ENCODE measurements at regions of chr17 and their contacts with region 1.

Region 1: DNA sequence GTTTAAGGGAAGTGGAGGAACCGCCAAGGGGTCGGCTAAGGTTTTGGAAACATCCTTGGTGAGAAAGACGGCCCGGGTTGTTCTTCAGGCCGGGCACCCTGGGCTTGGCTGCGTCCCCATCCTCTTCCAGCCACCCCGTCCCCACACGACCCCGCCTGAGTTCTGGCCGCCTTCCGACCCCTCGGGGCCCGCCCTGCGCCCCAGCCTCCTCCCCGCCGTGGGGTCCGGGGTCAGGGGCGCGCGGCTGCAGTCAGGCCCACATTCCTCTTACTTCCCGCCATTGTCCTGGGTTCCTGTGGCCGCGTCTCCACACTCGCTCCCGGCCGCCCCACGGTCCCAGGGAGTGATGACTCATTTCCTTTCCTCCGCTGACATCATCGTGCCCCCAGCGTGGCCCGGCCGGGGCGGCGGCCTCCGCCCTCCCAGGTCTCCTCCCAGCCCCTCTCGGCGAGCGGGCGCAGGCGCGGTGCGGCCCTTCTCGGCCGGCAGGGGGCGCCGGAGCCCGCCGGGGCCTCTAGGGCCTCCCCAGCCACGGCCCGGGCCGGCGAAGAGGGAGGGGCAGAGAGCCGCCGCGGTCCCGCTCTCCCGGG is 59.6 kb downstream of the WSB1 start:
- DNase-seq: peak; percentile 89
- H3K4me3 ChIP-seq: peak overlapping the region; percentile 69 to 73 (median 72)
- H3K27ac ChIP-seq: peak overlapping the region; percentile 78
- H3K4me1 ChIP-seq: peaks cover 10% of the 10 kb centered on the region
- H3K27me3 ChIP-seq: no peaks in the 10 kb centered on the region
- CTCF ChIP-seq: peak; percentile 54 to 60

Region 2: DNA sequence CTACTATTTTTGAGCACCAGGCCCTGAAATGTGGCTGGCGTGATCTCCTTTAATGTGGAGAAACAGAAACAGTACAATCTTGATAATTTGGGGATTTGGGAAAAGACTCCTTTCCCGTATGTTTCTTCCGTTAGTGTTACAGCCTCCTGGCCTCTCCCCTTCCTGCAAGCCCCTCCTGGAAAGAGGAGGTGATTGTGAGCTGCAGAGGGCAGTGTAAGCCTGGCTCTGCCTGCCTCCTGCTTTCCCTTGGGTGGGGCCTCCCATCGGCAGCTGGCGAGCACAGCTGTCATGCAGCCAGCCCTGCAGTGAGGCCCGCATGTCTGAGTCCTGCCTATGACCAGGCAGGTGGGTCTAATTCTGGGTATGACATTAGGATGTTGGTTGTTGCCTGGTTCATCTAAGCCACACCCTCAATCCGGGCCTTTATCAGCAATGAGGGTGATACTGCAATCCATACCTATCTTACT is 108.3 kb before region 1 on chr17:
- CTCF ChIA-PET with region 1: no interaction called
- dilution Hi-C with region 1: no loop called
- in situ Hi-C with region 1: no loop called
- intact Hi-C with region 1: loop called (anchors 2 kb)
- DNase-seq: peak; percentile 76
- H3K4me3 ChIP-seq: peak overlapping the region; percentile 12 to 26 (median 24)
- H3K27ac ChIP-seq: peak overlapping the region; percentile 71
- H3K4me1 ChIP-seq: peaks cover 47% of the 10 kb centered on the region
- H3K27me3 ChIP-seq: no peaks in the 10 kb centered on the region
- CTCF ChIP-seq: peak; percentile 66 to 77

Region 3: DNA sequence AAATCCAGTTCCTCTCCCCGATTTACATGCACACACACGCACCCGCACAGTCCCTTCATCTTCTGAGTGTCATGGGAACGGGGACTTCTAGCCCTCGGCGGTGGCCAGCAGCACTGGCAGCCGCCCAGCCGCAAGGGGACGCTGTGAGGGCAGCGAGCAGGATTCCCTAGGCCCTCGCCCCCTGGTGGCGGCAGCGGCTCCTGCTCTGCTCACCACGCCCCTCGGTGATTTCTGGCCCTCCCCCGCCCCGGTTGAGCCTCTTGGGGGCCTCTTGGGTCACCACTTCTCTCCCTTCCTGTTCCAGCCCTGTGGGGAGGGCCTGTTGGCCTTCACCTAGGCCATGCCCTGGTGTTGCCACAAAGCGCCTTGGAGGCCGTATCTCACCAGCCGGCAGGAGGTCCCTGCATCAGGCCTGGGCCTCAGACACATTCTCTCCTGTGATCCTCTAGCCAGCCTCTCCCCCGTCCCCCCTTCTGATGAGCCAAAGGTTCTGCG is 27.5 kb after region 1 on chr17:
- CTCF ChIA-PET with region 1: interaction called, 9 read pairs
- dilution Hi-C with region 1: no loop called
- in situ Hi-C with region 1: no loop called
- intact Hi-C with region 1: loop called (anchors 2 kb)
- DNase-seq: peak; percentile 23
- H3K4me3 ChIP-seq: no peak overlapping the region
- H3K27ac ChIP-seq: no peak overlapping the region
- H3K4me1 ChIP-seq: peaks cover 35% of the 10 kb centered on the region
- H3K27me3 ChIP-seq: no peaks in the 10 kb centered on the region
- CTCF ChIP-seq: peak; percentile 78 to 84

Region 4: GRCh38 chr17:27494192-27495091 is 140.9 kb after region 1 on chr17:
- CTCF ChIA-PET with region 1: interaction called, 3 read pairs
- dilution Hi-C with region 1: no loop called
- in situ Hi-C with region 1: no loop called
- intact Hi-C with region 1: loop called (anchors 5 kb)
- DNase-seq: peak; percentile 51
- H3K4me3 ChIP-seq: peak overlapping the region; percentile 8 to 34 (median 22)
- H3K27ac ChIP-seq: no peak overlapping the region
- H3K4me1 ChIP-seq: peaks cover 22% of the 10 kb centered on the region
- H3K27me3 ChIP-seq: no peaks in the 10 kb centered on the region
- CTCF ChIP-seq: peak; percentile 42 to 77

Region 5: GRCh38 chr17:27540318-27541101 is 187.0 kb after region 1 on chr17:
- CTCF ChIA-PET with region 1: no interaction called
- dilution Hi-C with region 1: no loop called
- in situ Hi-C with region 1: no loop called
- intact Hi-C with region 1: no loop called
- DNase-seq: peak; percentile 49
- H3K4me3 ChIP-seq: no peak overlapping the region
- H3K27ac ChIP-seq: no peak overlapping the region
- H3K4me1 ChIP-seq: no peaks in the 10 kb centered on the region
- H3K27me3 ChIP-seq: peaks cover 6% of the 10 kb centered on the region
- CTCF ChIP-seq: no peak

Measured in mammary epithelial cell (primary cell).